MCF 10A (cell line): ENCODE measurements at regions of chr19 and their contacts with region 1.

Region 1: DNA sequence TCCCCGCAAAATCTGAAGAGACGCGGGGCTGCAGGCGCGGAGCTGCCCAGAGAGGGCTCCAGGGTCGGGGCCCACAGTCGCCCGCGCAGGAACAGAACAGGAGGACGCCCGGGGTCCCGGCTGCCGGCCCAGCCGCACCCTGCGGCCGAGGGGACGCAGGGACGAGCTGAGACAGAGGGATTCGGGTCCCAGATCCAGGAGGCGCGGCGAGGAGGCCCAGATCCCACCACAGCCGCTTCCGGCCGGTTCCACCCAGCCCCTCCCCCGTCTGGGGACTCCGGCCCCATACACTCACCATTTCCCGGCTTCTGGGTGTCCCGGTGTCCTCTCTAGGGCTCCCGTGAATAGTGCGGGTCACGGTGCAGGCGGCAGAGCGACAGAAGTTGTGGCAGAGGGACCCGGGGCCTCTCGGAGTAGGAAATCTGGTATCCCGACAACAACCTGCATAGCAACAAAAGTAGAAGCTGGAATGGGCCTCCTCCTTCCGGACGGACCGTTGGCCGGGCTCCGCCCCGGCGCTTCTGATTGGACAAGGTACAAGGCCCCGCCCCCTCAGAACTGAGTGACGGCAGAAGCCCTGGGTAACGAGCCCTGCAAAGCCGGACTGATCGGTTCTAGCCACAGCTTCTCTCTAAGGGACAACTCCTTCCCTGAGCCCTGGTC is at the start of gene ZNF20:
- DNase-seq: peak; percentile 94
- H3K4me3 Mint-ChIP-seq: peak within 1 kb of the TSS; percentile 83
- H3K27ac Mint-ChIP-seq: peak within 1 kb of the TSS; percentile 93
- H3K4me1 Mint-ChIP-seq: peaks cover 22% of the 10 kb centered on the region
- H3K27me3 Mint-ChIP-seq: no peaks in the 10 kb centered on the region
- CTCF ChIP-seq: no peak
- total RNA-seq, gene ZNF20: 1.4 and 4.0 TPM in 2 replicates

Region 2: DNA sequence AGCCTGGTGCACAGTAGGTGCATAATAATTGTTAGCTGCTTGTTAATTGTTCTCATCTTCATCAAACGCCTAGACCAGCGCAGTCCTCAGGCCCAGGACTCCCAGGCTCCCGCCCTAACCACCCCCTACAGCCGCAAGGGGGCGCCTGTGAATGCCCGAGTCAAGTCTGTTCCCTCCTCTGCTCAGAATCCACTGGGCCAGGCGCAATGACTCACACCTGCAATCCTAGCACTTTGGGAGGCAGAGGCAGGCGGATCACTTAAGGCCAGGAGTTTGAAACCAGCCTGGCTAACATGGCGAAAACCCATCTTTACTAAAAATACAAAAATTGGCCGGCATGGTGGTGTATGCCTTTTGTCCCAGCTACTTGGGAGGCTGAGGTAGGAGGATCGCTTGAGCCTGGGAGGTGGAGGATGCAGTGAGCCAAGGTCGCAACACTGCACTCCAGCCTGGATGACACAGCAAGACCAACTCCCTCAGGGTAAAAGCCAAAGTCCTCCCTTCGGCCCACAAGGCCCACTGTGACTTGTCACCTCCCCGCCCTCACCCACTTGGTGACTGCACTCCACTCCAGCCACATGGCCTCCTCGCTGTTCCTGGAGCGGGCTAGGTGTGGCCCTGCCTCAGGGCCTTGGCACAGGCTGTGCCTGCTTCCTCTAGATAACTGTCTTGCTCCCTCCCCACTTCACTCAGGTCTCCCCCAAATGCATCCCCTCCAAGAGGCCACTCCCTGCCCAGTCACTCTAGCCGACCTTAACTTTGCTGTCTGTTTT is 643.4 kb before region 1 on chr19:
- CTCF ChIA-PET with region 1: no interaction called
- POLR2A ChIA-PET with region 1: no interaction called
- intact Hi-C with region 1: loop called (anchors 5 kb)
- DNase-seq: peak; percentile 93
- H3K4me3 Mint-ChIP-seq: no peak overlapping the region
- H3K27ac Mint-ChIP-seq: peak overlapping the region; percentile 40
- H3K4me1 Mint-ChIP-seq: peaks cover 5% of the 10 kb centered on the region
- H3K27me3 Mint-ChIP-seq: no peaks in the 10 kb centered on the region
- CTCF ChIP-seq: peak; percentile 73

Region 3: DNA sequence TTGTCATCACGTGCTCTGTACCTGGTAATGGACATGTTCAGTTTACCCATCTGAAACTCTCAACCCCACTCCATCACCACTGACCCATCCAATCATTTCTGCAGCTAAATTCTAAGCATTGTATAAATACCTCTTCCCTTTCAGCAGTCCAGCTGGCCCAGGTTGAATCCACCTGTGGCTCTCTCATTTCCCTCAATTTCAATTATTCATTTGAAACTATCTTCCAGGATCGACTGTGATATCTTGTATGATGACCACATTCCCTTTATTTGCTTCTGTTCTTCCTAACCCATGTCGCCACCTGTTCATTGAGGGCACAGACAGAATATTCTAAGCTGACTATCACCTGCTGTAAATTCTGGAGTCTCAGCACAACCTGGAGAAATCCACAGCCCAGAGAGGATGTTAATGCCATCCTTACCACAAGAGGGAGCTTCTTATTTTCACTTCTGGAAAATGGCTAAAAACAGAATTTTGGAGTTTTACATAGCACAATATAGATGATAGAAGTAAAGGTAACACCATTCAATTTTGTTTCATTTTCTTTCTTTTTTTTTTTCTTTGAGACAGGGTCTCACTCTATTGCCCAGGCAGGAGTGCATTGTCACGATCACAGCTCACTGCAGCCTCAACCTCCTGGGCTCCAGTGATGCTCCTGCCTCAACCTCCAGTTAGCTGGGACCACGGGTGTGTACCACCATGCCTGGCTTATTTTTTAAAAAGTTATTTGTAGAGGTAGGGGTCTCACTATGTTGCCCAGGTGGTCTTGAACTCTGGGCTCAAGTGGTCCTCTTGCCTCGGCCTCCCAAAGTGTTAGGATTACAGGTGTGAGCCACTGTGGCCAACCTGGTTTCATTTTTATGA is 439.9 kb before region 1 on chr19:
- CTCF ChIA-PET with region 1: interaction called, 8 read pairs
- POLR2A ChIA-PET with region 1: no interaction called
- intact Hi-C with region 1: loop called (anchors 1 kb)
- DNase-seq: peak; percentile 45
- H3K4me3 Mint-ChIP-seq: no peak overlapping the region
- H3K27ac Mint-ChIP-seq: no peak overlapping the region
- H3K4me1 Mint-ChIP-seq: no peaks in the 10 kb centered on the region
- H3K27me3 Mint-ChIP-seq: no peaks in the 10 kb centered on the region
- CTCF ChIP-seq: peak; percentile 62

Region 4: DNA sequence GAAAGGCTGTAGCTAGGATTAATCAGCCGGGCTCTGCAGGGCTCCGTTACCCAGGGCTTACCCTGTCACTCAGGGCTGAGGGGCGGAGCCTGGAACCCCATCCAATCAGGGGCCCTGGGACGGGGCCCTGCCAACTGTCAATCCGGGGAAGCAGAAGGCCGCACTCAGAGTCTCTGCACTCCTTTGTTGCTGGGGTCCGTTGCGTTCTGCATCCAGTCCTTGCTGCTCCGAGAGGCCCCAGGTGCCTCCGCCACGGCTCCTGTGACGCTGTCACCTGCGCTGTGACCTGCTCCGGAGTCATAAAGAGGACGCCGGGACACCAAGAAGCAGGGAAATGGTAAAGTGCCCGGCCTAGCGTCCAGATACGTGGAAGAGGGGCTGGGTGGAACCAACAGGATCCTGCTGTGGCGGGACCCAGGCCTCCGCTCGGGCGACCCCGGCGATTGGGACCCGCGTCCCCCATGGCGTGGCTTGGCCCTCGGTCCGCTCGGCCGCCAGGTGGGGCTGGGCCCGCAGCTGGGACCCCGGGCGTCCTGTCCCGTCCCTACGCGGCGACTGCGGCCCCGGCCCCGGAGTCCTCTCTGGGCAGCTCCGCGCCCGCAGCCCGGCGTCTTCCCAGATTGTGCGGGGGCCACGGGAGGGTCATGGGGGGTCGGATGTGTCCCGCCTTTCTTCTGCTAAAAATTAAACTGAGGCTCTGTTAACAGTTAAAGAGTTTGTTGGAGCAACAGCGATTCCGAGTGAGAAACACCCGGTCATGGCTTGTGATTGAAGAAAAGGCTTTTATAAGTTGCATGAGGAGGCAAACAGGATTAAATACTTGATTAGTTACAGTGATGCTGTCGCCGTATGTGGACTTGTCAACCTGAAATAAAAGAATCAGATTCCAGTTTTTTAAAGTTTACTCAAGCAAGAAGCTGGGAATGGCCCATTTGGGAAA is 341.4 kb before region 1 on chr19 and contains the start of gene ZNF491:
- CTCF ChIA-PET with region 1: interaction called, 17 read pairs
- POLR2A ChIA-PET with region 1: interaction called, 8 read pairs
- intact Hi-C with region 1: no loop called
- DNase-seq: no peak
- H3K4me3 Mint-ChIP-seq: no peak within 1 kb of the TSS
- H3K27ac Mint-ChIP-seq: no peak within 1 kb of the TSS
- H3K4me1 Mint-ChIP-seq: no peaks in the 10 kb centered on the region
- H3K27me3 Mint-ChIP-seq: no peaks in the 10 kb centered on the region
- CTCF ChIP-seq: no peak
- total RNA-seq, gene ZNF491: not detected in 2 replicates

Region 5: GRCh38 chr19:11987405-11988281 is 152.4 kb before region 1 on chr19:
- CTCF ChIA-PET with region 1: interaction called, 3 read pairs
- POLR2A ChIA-PET with region 1: interaction called, 24 read pairs
- intact Hi-C with region 1: loop called (anchors 1 kb)
- DNase-seq: peak; percentile 88
- H3K4me3 Mint-ChIP-seq: peak overlapping the region; percentile 80
- H3K27ac Mint-ChIP-seq: peak overlapping the region; percentile 20
- H3K4me1 Mint-ChIP-seq: no peaks in the 10 kb centered on the region
- H3K27me3 Mint-ChIP-seq: no peaks in the 10 kb centered on the region
- CTCF ChIP-seq: no peak

Region 6: DNA sequence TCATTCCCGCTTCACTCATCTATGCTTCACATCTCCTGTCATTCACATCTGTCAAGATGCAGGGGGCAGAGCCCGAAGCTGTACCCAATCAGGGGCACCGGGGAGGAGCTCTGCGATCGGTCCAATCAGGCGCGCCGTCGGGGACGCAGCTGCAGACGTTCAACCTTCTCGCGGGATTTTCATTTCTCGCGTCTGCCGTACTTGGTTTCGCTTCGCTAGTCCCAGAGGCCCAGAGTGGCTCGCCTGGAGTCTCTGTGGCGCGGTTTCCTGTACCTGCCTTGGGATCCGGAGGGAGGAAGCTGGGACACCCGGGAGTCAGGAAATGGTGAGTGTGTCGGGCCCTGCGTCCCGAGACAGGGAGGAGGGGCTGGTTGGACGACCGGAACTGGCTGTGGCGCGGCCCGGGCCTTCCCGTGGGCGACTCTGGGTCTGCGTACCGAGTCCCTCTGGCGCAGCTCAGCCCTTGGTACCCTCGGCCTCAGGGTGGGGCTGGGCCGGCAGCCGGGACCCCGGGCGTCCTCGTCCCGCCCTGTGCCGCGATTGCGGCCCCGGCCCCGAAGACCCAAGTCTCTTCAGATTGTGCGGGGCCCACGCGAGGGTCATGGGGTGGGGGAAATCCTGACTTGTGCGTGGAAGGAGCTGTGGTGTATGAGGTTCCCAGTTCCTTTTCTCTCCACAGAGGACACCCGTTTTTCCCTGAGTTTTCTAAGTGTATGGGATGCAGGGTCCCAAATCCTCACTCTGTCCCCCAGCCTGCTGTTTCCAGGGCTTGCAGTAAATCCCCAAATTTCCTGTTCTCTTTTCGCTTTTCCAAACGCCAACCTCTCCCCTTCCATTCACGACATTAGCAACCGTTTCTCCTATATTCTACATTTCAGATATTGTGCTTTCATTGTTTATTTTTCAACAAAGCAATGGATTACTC is 23.1 kb after region 1 on chr19 and contains the start of gene ZNF136:
- CTCF ChIA-PET with region 1: interaction called, 5 read pairs
- POLR2A ChIA-PET with region 1: interaction called, 22 read pairs
- intact Hi-C with region 1: no loop called
- DNase-seq: peak; percentile 96
- H3K4me3 Mint-ChIP-seq: peak within 1 kb of the TSS; percentile 83
- H3K27ac Mint-ChIP-seq: peak within 1 kb of the TSS; percentile 97
- H3K4me1 Mint-ChIP-seq: peaks cover 8% of the 10 kb centered on the region
- H3K27me3 Mint-ChIP-seq: no peaks in the 10 kb centered on the region
- CTCF ChIP-seq: no peak
- total RNA-seq, gene ZNF136: 3.7 and 4.3 TPM in 2 replicates